Activated naive CD4-positive, alpha-beta T cell treated with anti-CD3 and anti-CD28 coated beads for 36 hours (primary cell): ENCODE measurements at regions of chr5 and their contacts with region 1.

Region 1: DNA sequence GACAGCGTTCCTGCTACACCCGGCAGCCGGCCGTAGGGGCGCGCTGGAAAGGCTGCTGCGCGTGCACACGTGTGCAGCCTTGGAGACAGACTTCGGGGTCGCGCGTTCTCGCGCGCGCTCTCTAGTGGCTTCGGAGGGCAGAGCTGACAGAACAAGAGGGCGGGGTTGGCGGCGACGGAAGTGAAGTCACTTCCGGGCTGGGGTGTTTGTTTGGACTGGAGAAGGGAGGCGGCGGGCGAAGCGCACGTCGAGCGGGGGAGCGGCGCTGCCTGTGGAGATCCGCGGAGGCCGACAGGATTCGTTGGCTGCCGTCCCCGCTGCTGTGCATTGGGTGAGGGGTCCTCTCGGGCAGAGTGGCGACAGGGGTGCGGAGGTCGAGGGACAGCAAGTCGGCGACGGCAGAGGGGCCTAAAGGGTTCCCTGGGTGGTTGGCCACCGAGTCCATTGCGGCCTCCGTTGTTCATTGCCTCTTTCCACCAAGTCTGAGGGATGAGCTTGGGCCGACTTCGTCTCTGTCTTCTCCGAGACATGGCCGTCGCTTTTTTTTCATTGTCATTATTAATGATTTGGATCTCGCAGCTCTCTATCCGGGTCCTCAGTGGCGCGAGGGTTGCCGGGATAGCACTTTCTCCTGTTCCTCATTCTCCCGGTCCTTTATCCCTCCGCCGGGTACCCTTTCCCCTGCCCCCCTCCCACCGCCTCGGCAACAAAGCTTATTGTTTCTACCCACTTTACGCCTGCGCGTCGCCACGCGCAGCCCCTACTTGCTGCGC is at the start of gene PAIP2:
- DNase-seq: peak; percentile 99
- H3K4me3 Mint-ChIP-seq: peak within 1 kb of the TSS; percentile 100
- H3K27ac Mint-ChIP-seq: peak within 1 kb of the TSS; percentile 99
- H3K4me1 Mint-ChIP-seq: peaks cover 48% of the 10 kb centered on the region
- H3K27me3 Mint-ChIP-seq: no peaks in the 10 kb centered on the region
- total RNA-seq, gene PAIP2: 68.8 to 74.3 TPM

Region 2: GRCh38 chr5:139273572-139274289 is 68.1 kb before region 1 on chr5:
- CTCF ChIA-PET with region 1: interaction called, 14 read pairs
- intact Hi-C with region 1: loop called (anchors 1 kb)
- DNase-seq: peak; percentile 91
- H3K4me3 Mint-ChIP-seq: peak overlapping the region; percentile 93
- H3K27ac Mint-ChIP-seq: peak overlapping the region; percentile 80
- H3K4me1 Mint-ChIP-seq: peaks cover 50% of the 10 kb centered on the region
- H3K27me3 Mint-ChIP-seq: no peaks in the 10 kb centered on the region